ENCODE measurements at regions of chr22 and their contacts with region 1.

Region 1: DNA sequence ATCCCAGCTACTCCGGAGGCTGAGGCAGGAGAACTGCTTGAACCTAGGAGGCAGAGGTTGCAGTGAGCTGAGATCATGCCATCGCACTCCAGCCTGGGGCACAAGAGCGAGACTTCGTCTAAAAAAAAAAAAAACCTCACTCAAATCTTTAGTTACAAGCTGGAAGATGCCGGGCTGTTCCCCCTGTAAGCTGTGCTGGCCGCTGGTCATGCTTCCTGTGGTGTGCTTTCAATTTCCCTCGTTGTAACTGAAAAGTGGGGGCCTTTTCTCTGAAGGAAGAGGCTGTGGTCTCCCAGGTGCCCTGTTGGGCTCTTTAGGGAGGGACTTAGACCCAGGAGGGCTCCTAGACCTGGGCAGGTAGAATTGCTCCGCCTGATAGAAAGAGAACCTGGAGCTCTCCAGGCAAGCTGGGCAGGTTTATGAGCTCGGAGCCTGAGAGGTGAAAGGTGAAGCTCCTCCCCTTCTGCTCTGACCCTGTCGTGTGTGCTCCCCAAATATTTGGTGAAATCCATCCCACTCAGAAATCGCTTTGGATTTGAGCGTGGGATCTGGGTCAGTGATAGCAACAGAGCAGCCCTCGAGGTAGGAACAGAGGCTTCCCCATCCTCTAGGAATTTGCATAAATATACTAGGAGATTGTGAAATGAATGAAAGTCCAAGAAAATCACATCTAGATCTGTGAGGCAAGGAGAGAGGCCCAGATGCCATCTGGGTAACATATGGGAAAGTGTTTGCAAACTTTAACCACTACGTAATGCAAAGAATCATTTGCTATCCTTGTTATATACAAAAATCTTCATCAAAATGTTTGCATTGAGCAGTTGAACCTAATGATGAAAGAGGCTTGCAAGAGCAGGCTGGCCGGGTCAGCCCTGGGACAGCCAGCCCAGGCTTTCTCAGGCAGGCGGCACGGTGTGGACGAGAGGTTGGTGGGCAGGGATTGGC is 154.3 kb downstream of the FBXO7 start:
- DNase-seq: no peak
- H3K4me3 ChIP-seq: no peak overlapping the region
- H3K27ac ChIP-seq: peak overlapping the region in 1 of 2 donors; percentile 30
- H3K4me1 ChIP-seq: peaks cover 5% of the 10 kb centered on the region
- H3K27me3 ChIP-seq: no peaks in the 10 kb centered on the region
- CTCF ChIP-seq: no peak
- EP300 ChIP-seq: no peak
- POLR2A ChIP-seq: no peak

Region 2: GRCh38 chr22:31206906-31207678 is 1421.8 kb before region 1 on chr22:
- intact Hi-C with region 1: loop called in 1 of 4 experiments (anchors 5 kb)
- DNase-seq: no peak
- H3K4me3 ChIP-seq: no peak overlapping the region
- H3K27ac ChIP-seq: no peak overlapping the region
- H3K4me1 ChIP-seq: no peaks in the 10 kb centered on the region
- H3K27me3 ChIP-seq: no peaks in the 10 kb centered on the region
- CTCF ChIP-seq: no peak
- EP300 ChIP-seq: no peak
- POLR2A ChIP-seq: no peak

Region 3: GRCh38 chr22:32430352-32430751 is 198.5 kb before region 1 on chr22:
- intact Hi-C with region 1: no loop called
- DNase-seq: no peak
- H3K4me3 ChIP-seq: no peak overlapping the region
- H3K27ac ChIP-seq: no peak overlapping the region
- H3K4me1 ChIP-seq: no peaks in the 10 kb centered on the region
- H3K27me3 ChIP-seq: no peaks in the 10 kb centered on the region
- CTCF ChIP-seq: no peak
- EP300 ChIP-seq: no peak
- POLR2A ChIP-seq: no peak